Naive thymus-derived CD4-positive, alpha-beta T cell (primary cell): ENCODE measurements at regions of chr10 and their contacts with region 1.

Region 1: DNA sequence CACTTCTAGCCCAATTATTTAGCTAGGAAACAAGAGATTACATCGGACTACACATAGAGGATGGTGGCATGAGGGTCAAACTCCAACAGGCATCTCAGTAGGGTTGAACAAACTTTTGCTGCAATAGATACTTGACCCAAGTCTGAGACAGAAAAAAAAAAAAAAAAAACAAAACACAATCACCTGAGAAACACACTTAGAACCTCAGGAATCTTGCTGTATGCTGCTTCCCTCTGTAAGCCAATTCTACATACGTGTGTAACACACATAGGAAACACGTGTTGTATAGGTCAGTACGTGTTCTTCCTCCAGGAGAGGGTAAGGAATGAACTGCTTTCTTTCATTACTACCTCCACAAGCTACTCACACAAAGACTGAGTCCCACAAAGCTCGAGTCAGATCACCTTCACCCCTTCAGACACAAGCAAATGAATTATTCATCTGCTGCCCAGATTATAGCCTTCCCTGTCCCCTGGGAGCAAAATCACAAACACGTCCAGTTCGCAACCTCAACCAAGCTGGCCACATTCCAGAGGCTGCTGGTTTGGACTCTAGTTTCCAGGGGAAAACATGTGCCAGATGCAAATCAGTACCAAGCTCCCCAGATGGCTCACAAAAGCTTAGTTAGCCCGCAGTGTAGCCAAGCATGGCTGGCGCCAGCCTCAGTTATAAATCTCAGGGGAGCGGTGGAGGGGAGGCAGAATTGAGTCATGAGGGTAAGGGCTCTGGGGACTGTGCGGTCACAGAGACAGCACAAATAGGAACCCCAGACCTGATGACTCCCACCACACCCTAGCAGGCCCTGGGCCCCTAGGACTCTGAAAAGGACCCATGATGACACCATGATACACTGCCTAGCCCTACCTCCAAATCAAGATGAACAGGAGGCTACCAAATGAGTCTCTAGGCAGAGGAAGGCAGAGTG is 15.1 kb downstream of the PSAP start:
- DNase-seq: no peak
- ATAC-seq: peak; percentile 70
- H3K4me3 ChIP-seq: no peak overlapping the region
- H3K4me3 Mint-ChIP-seq: no peak overlapping the region
- H3K27ac ChIP-seq: no peak overlapping the region
- H3K27ac Mint-ChIP-seq: peak overlapping the region in 5 of 9 donors; percentile 22 to 78 (median 32)
- H3K4me1 ChIP-seq: peaks cover 5 to 12% of the 10 kb centered on the region in 2 donors
- H3K4me1 Mint-ChIP-seq: peaks cover 41 to 72% (median 56%) of the 10 kb centered on the region in 7 donors
- H3K27me3 ChIP-seq: no peaks in the 10 kb centered on the region
- H3K27me3 Mint-ChIP-seq: no peaks in the 10 kb centered on the region

Region 2: DNA sequence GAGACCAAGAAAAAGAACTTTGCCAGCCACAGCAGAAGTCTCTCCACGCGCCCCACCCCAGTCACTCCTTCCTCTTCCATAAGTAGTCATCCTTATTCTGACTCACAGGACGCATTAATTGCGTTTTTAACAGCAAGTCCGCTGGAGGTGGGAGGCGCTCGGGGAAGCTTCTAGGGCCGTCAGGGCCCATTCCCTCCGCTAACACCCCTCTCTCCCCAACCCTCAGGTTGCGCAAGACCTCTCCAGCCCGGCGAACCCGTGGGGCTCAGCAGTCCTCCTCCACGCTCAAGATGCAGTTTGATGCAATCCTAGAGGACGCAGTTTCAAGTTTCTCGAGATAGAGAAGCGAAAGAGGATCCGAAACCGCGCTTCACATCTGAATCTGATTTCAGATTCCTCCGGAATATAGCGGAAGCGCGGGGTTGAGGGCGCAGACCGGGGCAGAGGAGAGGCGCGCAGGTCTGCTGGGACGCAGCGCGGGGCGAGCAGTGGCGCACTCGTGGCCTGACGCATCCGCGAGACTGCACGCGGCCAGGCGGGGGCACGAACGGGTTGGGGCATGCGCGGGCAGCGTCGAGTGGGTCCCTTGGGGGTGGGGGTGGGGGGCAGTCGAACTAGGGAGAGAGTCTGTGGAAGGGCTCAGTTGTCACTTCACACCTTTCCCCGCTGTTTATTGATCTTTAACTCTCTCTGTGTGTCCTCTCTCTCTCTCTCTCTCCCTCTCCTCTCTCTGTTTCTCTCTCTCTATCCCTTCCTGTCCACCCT is 52.9 kb after region 1 on chr10:
- CTCF ChIA-PET with region 1: no interaction called
- POLR2A ChIA-PET with region 1: no interaction called
- intact Hi-C with region 1: loop called (anchors 2 to 10 kb)
- DNase-seq: peak; percentile 27 to 65 (median 51)
- ATAC-seq: peak; percentile 86
- H3K4me3 ChIP-seq: peak overlapping the region; percentile 86
- H3K4me3 Mint-ChIP-seq: peak overlapping the region; percentile 89 to 95 (median 92)
- H3K27ac ChIP-seq: peak overlapping the region; percentile 33
- H3K27ac Mint-ChIP-seq: peak overlapping the region in 8 of 9 donors; percentile 51 to 94 (median 79)
- H3K4me1 ChIP-seq: peaks cover 0 to 7% of the 10 kb centered on the region in 2 donors
- H3K4me1 Mint-ChIP-seq: peaks cover 11 to 19% (median 16%) of the 10 kb centered on the region in 7 donors
- H3K27me3 ChIP-seq: no peaks in the 10 kb centered on the region
- H3K27me3 Mint-ChIP-seq: peaks cover 0 to 23% (median 0%) of the 10 kb centered on the region in 5 donors